ENCODE measurements at regions of chrX and their contacts with region 1.

Region 1: GRCh38 chrX:318739-319578 is at the start of gene GTPBP6:
- DNase-seq: peak; percentile 99 to 100
- ATAC-seq: peak; percentile 67 to 89 (median 75)
- H3K4me3 ChIP-seq: peak within 1 kb of the TSS; percentile 99
- H3K4me3 Mint-ChIP-seq: peak within 1 kb of the TSS; percentile 94
- H3K27ac ChIP-seq: peak within 1 kb of the TSS; percentile 92
- H3K27ac Mint-ChIP-seq: peak within 1 kb of the TSS; percentile 96
- H3K4me1 ChIP-seq: peaks cover 49% of the 10 kb centered on the region
- H3K4me1 Mint-ChIP-seq: peaks cover 18 to 34% of the 10 kb centered on the region in 2 donors
- H3K27me3 ChIP-seq: no peaks in the 10 kb centered on the region
- H3K27me3 Mint-ChIP-seq: no peaks in the 10 kb centered on the region
- CTCF ChIP-seq: no peak
- total RNA-seq, gene GTPBP6: 46.9 to 62.8 (median 49.8) TPM

Region 2: DNA sequence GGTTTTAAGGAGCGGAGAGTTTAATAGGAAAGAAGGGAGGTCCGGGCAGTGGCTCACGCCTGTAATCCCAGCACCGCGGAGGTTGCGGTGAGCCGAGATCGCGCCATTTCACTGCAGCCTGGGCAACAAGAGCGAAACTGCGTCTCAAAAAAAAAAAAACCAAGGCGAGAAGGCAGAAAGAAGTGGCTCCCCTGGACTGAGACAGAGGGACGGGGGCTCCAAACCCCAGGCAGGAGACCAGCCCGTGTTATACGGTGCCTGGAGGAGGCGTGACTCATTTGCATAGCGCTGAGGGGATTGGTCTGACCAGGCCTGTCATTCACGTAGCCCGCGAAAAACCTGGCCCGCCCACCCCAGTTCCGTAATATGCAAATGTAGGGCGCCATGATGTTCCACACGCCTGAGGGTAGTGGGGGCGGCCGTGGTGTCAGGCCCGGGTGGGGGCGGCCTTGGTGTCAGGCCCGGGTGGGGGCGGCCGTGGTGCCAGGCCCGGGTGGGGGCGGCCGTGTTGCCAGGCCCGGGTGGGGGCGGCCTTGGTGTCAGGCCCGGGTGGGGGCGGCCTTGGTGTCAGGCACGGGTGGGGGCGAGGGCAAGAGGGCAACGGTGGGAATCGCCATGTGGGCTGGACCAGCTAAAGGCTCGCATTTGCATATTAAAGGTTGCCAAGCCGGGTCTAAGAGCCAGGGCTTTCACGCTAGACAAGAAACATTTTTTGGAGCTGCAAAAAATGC is 35.7 kb before region 1 on chrX:
- intact Hi-C with region 1: loop called (anchors 2 kb)
- DNase-seq: peak; percentile 80 to 94
- ATAC-seq: peak; percentile 98 to 99 (median 99)
- H3K4me3 ChIP-seq: peak overlapping the region; percentile 76
- H3K4me3 Mint-ChIP-seq: peak overlapping the region; percentile 87
- H3K27ac ChIP-seq: peak overlapping the region; percentile 59
- H3K27ac Mint-ChIP-seq: peak overlapping the region; percentile 77 to 90
- H3K4me1 ChIP-seq: peaks cover 12% of the 10 kb centered on the region
- H3K4me1 Mint-ChIP-seq: peaks cover 0 to 27% of the 10 kb centered on the region in 2 donors
- H3K27me3 ChIP-seq: no peaks in the 10 kb centered on the region
- H3K27me3 Mint-ChIP-seq: no peaks in the 10 kb centered on the region
- CTCF ChIP-seq: no peak

Region 3: GRCh38 chrX:386768-387575 is 68.0 kb after region 1 on chrX and contains the start of gene PPP2R3B:
- intact Hi-C with region 1: loop called (anchors 1 kb)
- DNase-seq: peak; percentile 97 to 100
- ATAC-seq: peak; percentile 93 to 96 (median 94)
- H3K4me3 ChIP-seq: peak within 1 kb of the TSS; percentile 95
- H3K4me3 Mint-ChIP-seq: peak within 1 kb of the TSS; percentile 99
- H3K27ac ChIP-seq: peak within 1 kb of the TSS; percentile 99
- H3K27ac Mint-ChIP-seq: peak within 1 kb of the TSS; percentile 99 to 100
- H3K4me1 ChIP-seq: peaks cover 10% of the 10 kb centered on the region
- H3K4me1 Mint-ChIP-seq: peaks cover 10% of the 10 kb centered on the region in 2 donors
- H3K27me3 ChIP-seq: no peaks in the 10 kb centered on the region
- H3K27me3 Mint-ChIP-seq: no peaks in the 10 kb centered on the region
- CTCF ChIP-seq: no peak
- total RNA-seq, gene PPP2R3B: 14.0 to 19.4 (median 14.6) TPM

Measured in natural killer cell (primary cell).